Transverse colon (tissue), 4 donors: ENCODE measurements at regions of chr4 and their contacts with region 1.

Region 1: GRCh38 chr4:151760712-151761527 is at the start of gene GATB:
- DNase-seq: peak; percentile 93
- H3K4me3 ChIP-seq: peak within 1 kb of the TSS; percentile 56 to 93 (median 74)
- H3K27ac ChIP-seq: peak within 1 kb of the TSS; percentile 60 to 79 (median 66)
- H3K4me1 ChIP-seq: peaks cover 5 to 10% (median 7%) of the 10 kb centered on the region in 4 donors
- H3K27me3 ChIP-seq: peaks cover 14% of the 10 kb centered on the region
- CTCF ChIP-seq: peak; percentile 37 to 59 (median 49)
- EP300 ChIP-seq: no peak
- POLR2A ChIP-seq: peak; percentile 65
- total RNA-seq, gene GATB: 22.5 to 111 (median 27.3) TPM

Region 2: GRCh38 chr4:151099229-151099975 is 661.5 kb before region 1 on chr4 and contains the start of gene RPS3A:
- in situ Hi-C with region 1: loop called in 1 of 4 experiments (anchors 25 kb)
- intact Hi-C with region 1: no loop called
- DNase-seq: peak; percentile 97
- H3K4me3 ChIP-seq: peak within 1 kb of the TSS; percentile 63 to 82 (median 67)
- H3K27ac ChIP-seq: peak within 1 kb of the TSS; percentile 84 to 92 (median 90)
- H3K4me1 ChIP-seq: peaks cover 5 to 26% (median 20%) of the 10 kb centered on the region in 4 donors
- H3K27me3 ChIP-seq: no peaks in the 10 kb centered on the region
- CTCF ChIP-seq: peak; percentile 51 to 67 (median 60)
- EP300 ChIP-seq: no peak
- POLR2A ChIP-seq: peak; percentile 89
- total RNA-seq, gene RPS3A: 905 to 2,947 (median 1,612) TPM